ENCODE measurements at regions of chr13 and their contacts with region 1.

Region 1: GRCh38 chr13:113816946-113817859 is 46.7 kb downstream of the GAS6 start:
- H3K4me3 Mint-ChIP-seq: peak overlapping the region; percentile 84
- H3K27ac Mint-ChIP-seq: peak overlapping the region; percentile 89
- H3K4me1 Mint-ChIP-seq: peaks cover 39% of the 10 kb centered on the region
- H3K27me3 Mint-ChIP-seq: peaks cover 1% of the 10 kb centered on the region

Region 2: GRCh38 chr13:113862766-113863435 is 45.7 kb after region 1 on chr13:
- intact Hi-C with region 1: no loop called
- H3K4me3 Mint-ChIP-seq: peak overlapping the region; percentile 92
- H3K27ac Mint-ChIP-seq: peak overlapping the region; percentile 93
- H3K4me1 Mint-ChIP-seq: peaks cover 63% of the 10 kb centered on the region
- H3K27me3 Mint-ChIP-seq: peaks cover 23% of the 10 kb centered on the region

Region 3: GRCh38 chr13:113951246-113951999 is 134.2 kb after region 1 on chr13:
- intact Hi-C with region 1: loop called (anchors 2 kb)
- H3K4me3 Mint-ChIP-seq: peak overlapping the region; percentile 35
- H3K27ac Mint-ChIP-seq: no peak overlapping the region
- H3K4me1 Mint-ChIP-seq: peaks cover 37% of the 10 kb centered on the region
- H3K27me3 Mint-ChIP-seq: peaks cover 24% of the 10 kb centered on the region

Measured in dendritic cell treated with granulocyte-macrophage colony-stimulating factor and Interleukin-4, amounts not matched to agents 40 ng/mL and 50 ng/mL, for 4 days (primary cell).